Posterior vena cava (tissue), 2 donors: ENCODE measurements at regions of chr2 and their contacts with region 1.

Region 1: DNA sequence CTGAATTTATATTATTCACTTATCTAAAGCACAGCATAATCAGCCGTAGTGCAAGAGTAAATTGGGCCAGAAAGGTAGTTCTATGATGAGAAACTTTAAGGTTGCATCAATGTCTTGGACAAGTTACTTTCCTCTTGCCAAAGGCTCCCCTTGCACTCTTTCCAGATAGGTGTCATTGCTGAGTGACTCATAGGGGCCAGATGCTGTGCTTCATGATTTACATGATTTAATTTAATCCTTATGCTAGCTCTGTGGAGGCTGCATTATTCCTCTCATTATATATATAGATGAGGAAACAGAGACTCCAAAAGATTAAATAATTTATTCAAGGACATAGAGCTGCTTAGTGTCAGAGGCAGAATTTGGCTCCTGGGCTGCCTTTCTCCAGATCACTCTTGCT is 5.0 kb downstream of the CFAP221 start:
- DNase-seq: no peak

Region 2: GRCh38 chr2:119523952-119524694 is 25.1 kb before region 1 on chr2 and contains the start of gene SCTR:
- intact Hi-C with region 1: loop called in 1 of 2 experiments (anchors 2 kb)
- DNase-seq: no peak
- total RNA-seq, gene SCTR: not detected

Region 3: GRCh38 chr2:120223034-120223912 is 674.0 kb after region 1 on chr2 and contains the start of gene TMEM185B:
- intact Hi-C with region 1: no loop called
- DNase-seq: peak; percentile 98
- total RNA-seq, gene TMEM185B: 16.0 to 22.7 TPM